Activated CD4-positive, alpha-beta T cell treated with anti-CD3 and anti-CD28 coated beads for 36 hours (primary cell): ENCODE measurements at regions of chr19 and their contacts with region 1.

Region 1: DNA sequence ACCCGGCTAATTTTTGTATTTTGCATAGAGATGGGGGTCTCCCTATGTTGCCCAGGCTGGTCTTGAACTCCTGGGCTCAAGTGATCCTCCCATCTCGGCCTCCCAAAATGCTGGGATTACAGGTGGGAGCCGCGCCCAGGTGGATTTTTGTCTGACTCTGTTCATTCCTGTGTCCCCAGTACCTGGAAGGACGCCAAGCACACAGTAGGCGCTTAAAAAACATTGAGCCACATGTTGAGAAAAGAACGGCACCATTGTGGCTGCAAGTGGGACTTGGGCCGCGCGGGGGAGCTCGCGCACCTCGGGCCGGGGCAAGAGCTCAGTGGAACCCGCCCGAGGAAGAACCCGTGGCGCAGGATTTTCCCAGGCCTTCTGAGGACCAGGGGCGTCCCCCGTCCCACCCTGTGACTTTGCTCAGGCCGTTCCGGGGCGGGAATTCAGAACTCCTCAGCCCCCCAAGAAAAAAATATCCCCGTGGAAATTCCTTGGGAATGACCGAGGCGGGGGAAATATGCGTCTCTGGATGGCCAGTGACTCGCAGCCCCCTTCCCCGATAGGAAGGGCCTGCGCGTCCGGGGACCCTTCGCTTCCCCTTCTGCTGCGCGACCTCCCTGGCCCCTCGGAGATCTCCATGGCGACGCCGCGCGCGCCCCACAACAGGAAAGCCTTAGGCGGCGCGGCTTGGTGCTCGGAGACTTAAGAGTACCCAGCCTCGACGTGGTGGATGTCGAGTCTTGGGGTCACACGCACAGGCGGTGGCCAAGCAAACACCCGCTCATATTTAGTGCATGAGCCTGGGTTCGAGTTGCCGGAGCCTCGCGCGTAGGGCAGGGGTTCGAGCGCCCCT is 1.4 kb upstream of the ICAM1 start:
- DNase-seq: peak; percentile 94
- ATAC-seq: peak; percentile 62
- H3K4me3 Mint-ChIP-seq: peak overlapping the region; percentile 80
- H3K27ac Mint-ChIP-seq: peak overlapping the region; percentile 91
- H3K4me1 Mint-ChIP-seq: peaks cover 35% of the 10 kb centered on the region
- H3K27me3 Mint-ChIP-seq: no peaks in the 10 kb centered on the region

Region 2: DNA sequence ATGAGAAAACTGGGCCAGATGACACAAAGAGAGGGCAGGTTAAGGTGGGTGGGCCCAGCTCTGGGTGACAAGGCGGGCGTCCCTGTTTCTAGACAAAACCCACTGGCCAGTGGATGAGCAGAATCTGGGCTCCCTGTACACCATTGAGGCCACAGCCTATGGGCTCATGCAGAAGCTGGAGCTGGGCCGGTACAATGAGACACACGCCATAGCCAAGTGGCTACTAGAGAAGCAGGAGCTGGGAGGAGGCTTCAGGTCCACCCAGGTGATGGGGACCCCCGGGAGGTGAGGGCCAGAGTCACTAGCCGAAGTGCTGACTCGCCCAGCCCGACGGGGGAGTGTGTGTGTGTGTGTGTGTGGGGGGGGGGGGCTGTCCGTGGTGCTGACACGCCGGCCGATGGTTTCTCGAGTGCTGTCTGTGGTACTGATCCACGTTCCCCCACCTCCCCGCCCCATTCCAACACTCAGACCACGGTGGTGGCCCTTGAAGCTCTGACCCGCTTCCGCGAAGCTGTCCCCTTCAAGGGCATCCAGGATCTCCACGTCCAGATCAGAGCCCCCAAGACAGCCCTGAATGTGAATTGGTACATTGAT is 207.7 kb before region 1 on chr19:
- CTCF ChIA-PET with region 1: no interaction called
- POLR2A ChIA-PET with region 1: no interaction called
- intact Hi-C with region 1: no loop called
- DNase-seq: no peak
- ATAC-seq: no peak
- H3K4me3 Mint-ChIP-seq: no peak overlapping the region
- H3K27ac Mint-ChIP-seq: no peak overlapping the region
- H3K4me1 Mint-ChIP-seq: no peaks in the 10 kb centered on the region
- H3K27me3 Mint-ChIP-seq: peaks cover 9% of the 10 kb centered on the region

Region 3: DNA sequence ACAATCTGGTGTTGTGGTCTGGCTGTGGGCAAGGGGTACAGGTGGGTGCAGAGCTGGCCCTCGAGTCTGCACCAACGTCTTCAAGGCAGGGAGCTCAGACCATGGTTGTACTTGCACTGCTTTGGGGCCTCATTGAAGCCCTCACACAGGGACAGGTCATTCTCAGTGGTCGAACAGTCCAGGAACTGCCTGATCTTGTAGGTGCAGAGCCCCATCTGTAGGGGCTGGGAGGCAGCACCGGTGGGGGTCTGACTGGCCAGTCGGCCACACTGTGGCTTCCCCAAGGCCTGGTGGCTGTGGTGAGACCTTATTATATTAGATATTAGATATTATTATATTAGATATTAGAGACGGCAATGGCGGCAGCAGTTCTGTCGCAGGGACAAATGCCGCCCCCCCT is 52.5 kb before region 1 on chr19:
- CTCF ChIA-PET with region 1: no interaction called
- POLR2A ChIA-PET with region 1: no interaction called
- intact Hi-C with region 1: no loop called
- DNase-seq: no peak
- ATAC-seq: no peak
- H3K4me3 Mint-ChIP-seq: no peak overlapping the region
- H3K27ac Mint-ChIP-seq: no peak overlapping the region
- H3K4me1 Mint-ChIP-seq: peaks cover 2% of the 10 kb centered on the region
- H3K27me3 Mint-ChIP-seq: no peaks in the 10 kb centered on the region

Region 4: GRCh38 chr19:10251792-10252694 is 17.5 kb before region 1 on chr19 and contains the start of gene MRPL4:
- CTCF ChIA-PET with region 1: interaction called, 82 read pairs
- POLR2A ChIA-PET with region 1: interaction called, 3 read pairs
- intact Hi-C with region 1: no loop called
- DNase-seq: peak; percentile 97
- ATAC-seq: peak; percentile 99
- H3K4me3 Mint-ChIP-seq: peak within 1 kb of the TSS; percentile 97
- H3K27ac Mint-ChIP-seq: peak within 1 kb of the TSS; percentile 97
- H3K4me1 Mint-ChIP-seq: peaks cover 18% of the 10 kb centered on the region
- H3K27me3 Mint-ChIP-seq: no peaks in the 10 kb centered on the region
- total RNA-seq, gene MRPL4: 130 to 140 TPM

Region 5: GRCh38 chr19:10279737-10280442 is 10.3 kb after region 1 on chr19:
- CTCF ChIA-PET with region 1: interaction called, 15 read pairs
- POLR2A ChIA-PET with region 1: interaction called, 18 read pairs
- intact Hi-C with region 1: no loop called
- DNase-seq: no peak
- ATAC-seq: no peak
- H3K4me3 Mint-ChIP-seq: no peak overlapping the region
- H3K27ac Mint-ChIP-seq: no peak overlapping the region
- H3K4me1 Mint-ChIP-seq: peaks cover 3% of the 10 kb centered on the region
- H3K27me3 Mint-ChIP-seq: no peaks in the 10 kb centered on the region

Region 6: GRCh38 chr19:10292206-10292788 is 22.7 kb after region 1 on chr19:
- CTCF ChIA-PET with region 1: interaction called, 14 read pairs
- POLR2A ChIA-PET with region 1: interaction called, 18 read pairs
- intact Hi-C with region 1: loop called (anchors 1 to 2 kb)
- DNase-seq: peak; percentile 92
- ATAC-seq: peak; percentile 63
- H3K4me3 Mint-ChIP-seq: peak overlapping the region; percentile 66
- H3K27ac Mint-ChIP-seq: no peak overlapping the region
- H3K4me1 Mint-ChIP-seq: peaks cover 59% of the 10 kb centered on the region
- H3K27me3 Mint-ChIP-seq: peaks cover 70% of the 10 kb centered on the region

Region 7: GRCh38 chr19:10339380-10339960 is 69.9 kb after region 1 on chr19 and contains the start of gene ICAM3:
- CTCF ChIA-PET with region 1: interaction called, 9 read pairs
- POLR2A ChIA-PET with region 1: no interaction called
- intact Hi-C with region 1: loop called in 1 of 2 experiments (anchors 2 kb)
- DNase-seq: peak; percentile 86
- ATAC-seq: peak; percentile 94
- H3K4me3 Mint-ChIP-seq: peak within 1 kb of the TSS; percentile 95
- H3K27ac Mint-ChIP-seq: peak within 1 kb of the TSS; percentile 97
- H3K4me1 Mint-ChIP-seq: peaks cover 28% of the 10 kb centered on the region
- H3K27me3 Mint-ChIP-seq: no peaks in the 10 kb centered on the region
- total RNA-seq, gene ICAM3: 109 to 122 TPM

Region 8: GRCh38 chr19:10388957-10389356 is 119.4 kb after region 1 on chr19:
- CTCF ChIA-PET with region 1: interaction called, 165 read pairs
- POLR2A ChIA-PET with region 1: interaction called, 8 read pairs
- intact Hi-C with region 1: loop called (anchors 1 kb)
- DNase-seq: peak; percentile 89
- ATAC-seq: peak; percentile 57
- H3K4me3 Mint-ChIP-seq: no peak overlapping the region
- H3K27ac Mint-ChIP-seq: no peak overlapping the region
- H3K4me1 Mint-ChIP-seq: no peaks in the 10 kb centered on the region
- H3K27me3 Mint-ChIP-seq: no peaks in the 10 kb centered on the region